A549 (cell line): ENCODE measurements at regions of chr9 and their contacts with region 1.

Region 1: DNA sequence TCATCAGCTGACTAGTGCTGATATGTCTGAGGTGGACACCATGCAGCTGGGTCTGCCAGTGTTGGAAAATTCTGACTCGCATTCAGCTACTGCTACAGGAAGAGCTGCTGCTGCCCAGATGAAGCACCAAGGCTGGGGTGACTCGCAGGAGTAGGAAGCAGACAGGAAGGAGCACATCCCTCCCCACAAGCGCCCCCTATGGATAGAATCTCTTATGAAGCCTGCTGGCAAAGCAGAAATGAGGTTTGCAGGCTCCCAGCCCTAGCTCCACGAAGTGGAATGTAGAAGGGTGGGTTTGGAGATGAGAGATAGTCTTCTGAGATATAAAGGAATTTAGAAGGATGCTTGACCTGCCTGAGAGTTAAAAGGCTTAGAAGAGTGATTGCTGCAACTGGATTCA is 443.0 kb downstream of the ACTL7B start:
- DNase-seq: peak in 1 of 2 experiments; percentile 28
- ATAC-seq: no peak; a peak in 1 of 6 replicates
- H3K4me3 ChIP-seq: no peak overlapping the region
- H3K27ac ChIP-seq: no peak overlapping the region
- H3K4me1 ChIP-seq: no peaks in the 10 kb centered on the region
- CTCF ChIP-seq: no peak
- EP300 ChIP-seq: no peak
- POLR2A ChIP-seq: no peak
- RAD21 ChIP-seq: no peak

Region 2: DNA sequence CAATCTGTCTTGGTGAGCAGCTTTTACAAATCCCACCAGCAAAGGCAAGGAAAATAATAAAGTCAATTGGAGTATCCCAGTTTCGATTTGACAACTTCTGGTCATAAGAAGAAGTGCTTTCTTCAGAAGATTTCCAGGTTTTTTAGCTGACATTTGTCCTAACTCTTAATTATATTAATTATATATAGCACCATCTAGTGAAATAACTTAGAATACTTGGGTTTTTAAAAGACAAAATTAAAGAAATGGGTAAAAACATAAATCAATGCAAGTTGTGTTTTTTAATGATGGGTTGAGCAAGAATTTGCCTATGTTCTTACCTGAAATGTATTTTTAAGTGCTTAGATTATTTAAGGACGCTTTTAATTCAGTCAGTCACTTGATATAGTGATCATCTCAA is 21.3 kb after region 1 on chr9:
- CTCF ChIA-PET with region 1: interaction called, 13 read pairs
- POLR2A ChIA-PET with region 1: no interaction called
- DNase-seq: no peak
- ATAC-seq: no peak
- H3K4me3 ChIP-seq: no peak overlapping the region
- H3K27ac ChIP-seq: no peak overlapping the region
- H3K4me1 ChIP-seq: no peaks in the 10 kb centered on the region
- CTCF ChIP-seq: no peak
- EP300 ChIP-seq: no peak
- POLR2A ChIP-seq: no peak
- RAD21 ChIP-seq: no peak